Right ventricle myocardium inferior (tissue), 1 donor: ENCODE measurements at regions of chr21 and their contacts with region 1.

Region 1: DNA sequence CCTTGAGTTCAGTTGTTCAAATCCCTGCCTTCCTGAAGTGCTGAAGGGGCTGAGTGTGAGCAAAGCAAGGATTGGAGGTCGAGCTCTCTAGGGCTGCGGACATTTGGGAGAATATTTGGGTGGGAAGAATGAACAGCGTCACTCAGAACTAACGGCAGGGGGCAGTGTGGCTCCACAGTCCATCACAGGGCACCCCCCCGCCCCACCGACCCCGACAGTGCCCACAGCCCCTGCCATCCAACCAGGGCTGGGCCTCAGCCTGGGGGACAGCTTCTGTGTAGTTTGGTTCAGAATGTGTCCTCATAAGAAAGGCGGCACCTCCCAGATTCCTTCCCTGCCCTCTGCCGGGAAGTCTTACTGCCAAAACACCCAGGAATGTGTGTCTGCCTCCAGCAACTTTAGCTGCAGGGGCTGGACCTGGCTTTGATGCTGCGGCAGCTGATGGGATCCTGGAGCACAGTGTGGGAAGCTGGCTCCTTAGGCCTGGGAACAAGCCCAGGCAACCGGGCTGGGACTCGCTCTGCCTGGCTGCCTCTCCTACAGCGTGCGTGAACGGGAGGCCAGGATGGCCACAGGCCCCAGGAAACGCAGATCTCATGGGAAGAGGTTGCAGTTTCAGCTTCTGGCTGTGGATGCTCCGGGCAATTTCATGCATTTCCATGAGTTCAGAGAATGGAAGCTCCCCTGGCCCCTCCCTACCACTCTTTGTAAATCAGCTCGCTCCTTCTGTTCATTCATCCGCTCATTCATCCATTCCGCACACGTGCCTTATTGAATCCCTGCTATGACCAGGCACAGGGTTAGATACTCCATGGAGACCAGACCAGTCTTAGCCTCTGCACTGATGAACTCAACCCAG is 104.9 kb upstream of the TMPRSS2 start:
- DNase-seq: peak; percentile 85
- ATAC-seq: peak; percentile 96

Region 2: DNA sequence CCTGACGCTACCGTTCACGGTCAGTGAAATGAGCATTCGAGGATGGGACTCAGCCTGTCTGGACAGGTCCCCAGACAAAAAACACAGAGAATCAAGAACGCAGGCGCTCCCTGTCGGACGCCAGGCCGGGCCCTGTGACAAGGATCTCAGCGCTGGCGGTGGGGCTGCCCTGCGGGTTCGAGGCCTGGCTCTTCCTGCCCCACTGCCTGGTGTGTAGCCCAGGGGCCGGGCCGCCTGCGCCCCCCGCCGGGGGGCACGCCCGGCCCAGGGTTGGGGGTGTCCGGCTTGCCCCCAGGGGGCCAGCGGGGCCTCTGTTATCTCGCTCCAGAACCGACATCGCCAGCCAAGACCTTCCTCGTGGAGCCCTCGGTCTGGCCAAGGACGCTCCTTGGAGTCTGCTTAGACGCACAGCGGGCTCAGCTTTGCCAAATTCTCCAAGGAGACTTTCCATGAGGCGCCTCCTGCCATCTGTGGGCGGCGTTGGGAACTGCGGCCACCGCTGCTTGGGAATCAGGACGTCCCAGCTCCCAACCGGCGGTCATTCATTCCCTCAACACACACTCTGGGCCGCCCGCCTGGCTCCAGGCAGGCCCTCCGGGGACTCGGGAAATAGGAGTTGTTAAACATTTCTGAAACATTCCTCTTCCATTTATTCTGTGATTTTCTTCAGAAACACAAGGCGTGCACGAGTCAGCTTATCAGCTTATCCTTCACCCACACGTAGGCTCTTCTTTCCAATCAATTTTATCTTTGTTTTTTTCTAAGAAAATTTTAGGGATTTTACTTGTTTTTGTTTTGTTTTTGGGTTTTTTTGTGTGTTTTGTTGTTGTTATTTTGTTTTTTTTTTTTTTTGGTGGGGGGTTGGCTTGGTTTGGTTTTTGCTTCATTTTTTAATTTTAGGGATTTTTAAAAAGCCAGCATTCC is 165.3 kb after region 1 on chr21:
- intact Hi-C with region 1: loop called (anchors 1 kb)
- DNase-seq: peak; percentile 88
- ATAC-seq: peak; percentile 94

Region 3: DNA sequence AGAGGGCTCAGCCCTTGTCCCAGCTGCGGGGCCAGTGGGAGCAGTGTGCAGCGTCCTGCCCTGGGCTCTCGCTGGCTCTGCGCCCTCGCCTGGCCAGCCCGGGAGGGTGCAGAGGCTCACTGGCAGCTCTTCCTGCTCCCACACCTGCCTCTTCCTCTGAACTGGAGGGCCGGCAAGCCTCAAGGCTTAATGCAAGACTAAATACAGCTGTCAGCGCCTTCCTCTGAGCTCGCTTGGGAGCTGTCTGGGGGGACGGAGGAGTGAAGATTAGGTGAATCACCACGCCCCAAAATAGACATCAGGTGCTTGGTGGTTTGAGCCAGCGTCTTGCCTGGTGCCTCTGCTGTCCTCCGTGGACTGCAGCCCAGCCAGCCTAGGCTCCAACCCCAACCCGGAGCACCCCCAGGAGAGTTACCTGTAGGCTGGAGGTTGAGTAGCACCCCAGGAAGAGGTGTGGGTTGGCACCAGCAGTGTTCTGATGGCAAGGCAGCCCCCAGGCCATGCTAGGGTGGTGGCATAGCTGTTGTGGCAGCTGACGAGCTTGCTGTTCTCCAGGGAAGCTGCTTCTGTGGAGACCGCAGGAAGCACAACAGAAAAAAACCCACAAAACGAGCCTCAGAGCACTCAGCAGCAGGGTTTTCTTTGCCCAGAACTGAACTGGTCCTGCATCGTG is 495.1 kb after region 1 on chr21:
- intact Hi-C with region 1: no loop called
- DNase-seq: peak; percentile 78
- ATAC-seq: peak; percentile 86